ENCODE measurements at regions of chr12 and their contacts with region 1.

Region 1: DNA sequence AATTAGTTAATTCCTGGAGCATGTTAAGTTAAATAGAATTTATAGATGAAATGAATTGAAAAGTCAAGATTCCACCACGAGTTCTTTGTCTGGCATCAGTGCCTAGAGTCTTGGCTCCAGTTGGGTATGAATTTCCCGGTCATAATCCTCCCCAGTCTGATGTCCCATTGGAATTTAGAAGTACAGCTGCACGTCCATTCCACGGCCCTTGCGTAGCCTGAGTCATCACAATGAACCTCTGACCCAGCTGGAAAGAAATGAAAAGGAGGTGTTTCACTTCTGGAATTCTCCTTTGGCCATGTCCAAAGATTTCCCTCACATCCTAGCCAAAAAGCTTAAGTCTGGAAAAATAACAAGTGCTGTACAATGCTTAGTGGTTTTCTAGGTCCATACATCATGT is 122.7 kb downstream of the KICS2 start:
- DNase-seq: no peak
- H3K4me3 ChIP-seq: no peak overlapping the region
- H3K27ac ChIP-seq: no peak overlapping the region
- H3K4me1 ChIP-seq: peaks cover 3% of the 10 kb centered on the region
- H3K27me3 ChIP-seq: no peaks in the 10 kb centered on the region
- CTCF ChIP-seq: no peak

Region 2: DNA sequence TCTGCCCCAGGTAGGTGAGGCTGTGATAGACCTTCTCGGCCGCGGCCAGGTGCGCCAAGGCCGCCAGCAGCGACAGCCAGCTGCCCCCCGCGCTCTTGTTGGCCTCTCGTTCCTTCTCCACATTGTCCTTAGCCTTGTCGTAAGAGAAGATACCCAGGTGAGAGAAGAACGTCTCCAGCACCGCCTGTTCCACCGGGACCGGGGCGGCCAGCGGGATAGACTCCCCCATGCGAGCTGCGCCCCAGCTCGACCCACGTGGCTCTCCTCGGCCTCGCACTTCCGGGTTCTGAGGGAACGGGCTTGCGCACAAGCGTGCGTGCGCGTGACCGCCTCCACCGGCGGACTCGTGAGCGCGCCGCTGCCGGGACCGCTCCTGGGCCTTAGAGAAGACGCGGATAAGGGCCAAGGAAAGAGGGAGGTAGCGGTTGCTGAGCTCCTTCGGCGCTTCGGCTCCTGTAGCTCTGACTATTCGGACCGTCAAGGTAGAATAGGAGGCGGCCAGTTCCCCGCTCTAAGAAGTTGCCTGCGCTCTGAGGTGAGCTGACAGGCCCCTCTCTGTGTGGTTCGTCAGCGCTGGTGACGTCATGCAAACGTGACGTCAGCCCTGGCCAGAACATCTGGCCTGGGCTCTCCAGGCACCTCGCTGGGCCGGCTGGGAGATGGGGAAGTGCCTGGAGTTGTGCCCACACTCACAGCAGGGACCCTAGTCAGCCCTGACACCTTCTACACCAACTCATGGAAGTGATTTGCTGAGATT is 122.8 kb after region 1 on chr12 and contains the start of gene KICS2:
- CTCF ChIA-PET with region 1: interaction called, 10 read pairs
- POLR2A ChIA-PET with region 1: no interaction called
- intact Hi-C with region 1: no loop called
- DNase-seq: peak; percentile 97
- H3K4me3 ChIP-seq: peak within 1 kb of the TSS; percentile 71
- H3K27ac ChIP-seq: peak within 1 kb of the TSS; percentile 80
- H3K4me1 ChIP-seq: peaks cover 23% of the 10 kb centered on the region
- H3K27me3 ChIP-seq: no peaks in the 10 kb centered on the region
- CTCF ChIP-seq: no peak
- total RNA-seq, gene KICS2: 10.8 and 14.0 TPM in 2 replicates

Measured in A673 (cell line).